GM10248 (cell line): ENCODE measurements at regions of chr7 and their contacts with region 1.

Region 1: GRCh38 chr7:138738551-138739335 is 37.6 kb upstream of the SVOPL start:
- DNase-seq: peak; percentile 76
- CTCF ChIP-seq: peak; percentile 91

Region 2: DNA sequence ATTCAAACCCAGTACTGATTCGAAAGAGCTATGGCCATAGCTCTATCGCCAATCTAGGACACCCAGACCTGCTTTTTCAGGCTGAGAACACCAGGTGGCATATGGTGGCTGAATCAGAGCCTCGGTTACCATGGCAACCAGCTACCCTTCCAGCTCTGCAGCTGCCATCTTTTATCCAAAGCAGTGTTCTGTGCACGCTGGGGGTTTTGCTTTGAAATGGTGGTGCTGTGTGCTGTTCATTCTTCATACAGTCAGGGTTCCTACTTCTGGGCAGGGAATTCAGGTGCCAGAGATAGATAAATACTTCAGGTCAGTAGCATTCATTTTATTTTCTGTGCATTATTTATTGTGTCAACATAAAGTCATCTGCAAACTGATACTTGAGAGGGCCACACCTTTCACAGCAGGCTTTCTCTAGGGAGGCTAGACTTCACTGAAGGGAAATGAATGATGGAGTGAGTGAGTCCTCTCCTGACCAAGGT is 577.1 kb before region 1 on chr7:
- CTCF ChIA-PET with region 1: interaction called, 71 read pairs
- POLR2A ChIA-PET with region 1: no interaction called
- DNase-seq: peak; percentile 87
- CTCF ChIP-seq: peak; percentile 66

Region 3: DNA sequence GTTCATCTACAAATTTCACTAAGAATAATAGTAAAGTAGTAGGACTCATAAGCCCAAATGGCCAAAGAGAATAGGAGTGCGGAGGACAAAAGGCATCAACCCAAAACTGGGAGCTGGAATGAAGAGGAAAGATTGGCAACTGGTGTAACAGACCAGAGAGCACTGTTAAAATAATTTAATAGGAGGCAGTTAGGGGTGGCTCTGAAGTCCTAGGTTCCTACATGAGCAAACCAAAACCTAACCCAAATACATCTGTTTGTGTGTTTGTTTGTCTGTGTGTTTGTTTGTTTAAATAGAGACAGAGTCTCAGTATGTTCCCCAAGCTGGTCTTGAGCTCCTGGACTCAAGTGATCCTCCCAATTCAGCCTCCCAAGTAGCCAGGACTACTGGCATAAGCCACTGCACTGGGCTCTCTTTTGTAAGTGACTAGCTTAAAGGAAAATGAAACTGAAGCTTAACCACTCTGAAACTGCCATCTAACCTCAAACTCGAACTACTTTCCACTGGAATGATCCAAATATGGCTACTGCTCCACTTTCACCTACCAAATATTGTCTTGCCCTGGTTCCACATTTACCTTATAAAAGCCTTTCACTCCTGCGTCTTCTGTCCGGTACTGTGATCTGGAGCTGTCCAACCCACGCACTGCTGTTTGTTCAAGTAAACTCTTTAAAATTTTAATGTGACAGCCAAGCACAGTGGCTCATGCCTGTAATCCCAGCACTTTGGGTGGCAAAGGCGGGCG is 567.6 kb before region 1 on chr7:
- CTCF ChIA-PET with region 1: interaction called, 10 read pairs
- POLR2A ChIA-PET with region 1: no interaction called
- DNase-seq: peak; percentile 35
- CTCF ChIP-seq: no peak

Region 4: DNA sequence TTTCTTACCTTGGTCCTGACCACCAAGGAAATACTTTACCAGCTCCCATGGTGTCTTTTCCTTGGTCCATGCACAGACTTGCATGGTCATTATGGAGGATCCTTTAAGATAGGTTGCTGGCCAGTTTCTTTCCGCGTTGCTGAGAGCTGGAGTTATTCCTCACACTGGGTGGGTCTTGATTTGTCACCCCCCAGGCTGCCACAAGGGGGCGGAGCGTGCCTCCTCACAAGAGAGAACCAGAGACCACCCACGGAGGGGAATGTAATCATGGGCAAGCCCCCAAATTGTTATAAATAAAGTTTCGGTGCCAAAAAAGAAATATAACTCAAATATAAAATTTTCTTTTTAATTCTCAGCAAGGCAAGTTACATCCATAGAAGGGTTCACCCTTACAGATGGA is 289.2 kb before region 1 on chr7:
- CTCF ChIA-PET with region 1: interaction called, 10 read pairs
- POLR2A ChIA-PET with region 1: no interaction called
- DNase-seq: no peak
- CTCF ChIP-seq: peak; percentile 42

Region 5: DNA sequence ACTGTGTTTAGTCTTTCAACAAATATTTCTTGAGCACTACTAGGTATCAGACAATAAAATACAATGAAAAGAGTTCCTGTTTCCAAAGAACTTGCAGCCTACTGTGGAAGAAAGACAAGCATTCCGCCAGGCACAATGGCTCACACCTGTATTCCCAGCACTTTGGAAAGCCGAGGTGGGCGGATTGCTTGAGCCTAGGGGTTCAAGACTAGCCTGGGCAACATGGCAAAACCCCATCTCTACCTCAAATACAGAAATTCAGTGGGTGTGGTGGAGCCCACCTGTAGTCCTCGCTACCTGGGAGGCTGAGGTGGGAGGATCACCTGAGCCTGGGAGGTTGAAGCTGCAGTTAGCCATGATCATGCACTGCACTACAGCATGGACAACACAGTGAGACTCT is 43.6 kb before region 1 on chr7:
- CTCF ChIA-PET with region 1: no interaction called
- POLR2A ChIA-PET with region 1: no interaction called
- DNase-seq: no peak
- CTCF ChIP-seq: no peak

Region 6: GRCh38 chr7:138750901-138751464 is 12.2 kb after region 1 on chr7:
- CTCF ChIA-PET with region 1: interaction called, 11 read pairs
- POLR2A ChIA-PET with region 1: no interaction called
- DNase-seq: no peak
- CTCF ChIP-seq: no peak

Region 7: DNA sequence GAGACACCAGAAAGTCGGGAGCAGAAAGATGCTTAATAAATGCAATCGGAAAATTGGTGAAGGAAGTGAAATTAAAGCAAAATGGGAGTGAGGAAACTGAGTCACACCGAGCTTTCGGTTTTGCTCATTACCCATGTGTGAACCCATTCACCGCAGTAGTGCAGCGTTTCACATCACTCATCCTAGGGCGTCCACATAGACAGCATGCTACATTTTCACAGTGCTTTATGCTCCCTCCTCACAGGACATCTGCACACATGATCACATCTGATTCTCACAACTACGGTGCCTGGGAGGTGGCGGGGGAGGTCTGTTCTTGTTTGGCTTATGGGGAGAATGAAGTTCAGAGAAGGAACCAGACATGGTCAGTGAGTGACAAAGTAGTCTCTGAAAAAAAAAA is 95.8 kb after region 1 on chr7:
- CTCF ChIA-PET with region 1: no interaction called
- POLR2A ChIA-PET with region 1: no interaction called
- DNase-seq: no peak
- CTCF ChIP-seq: no peak